Natural killer cell (primary cell): ENCODE measurements at regions of chr6 and their contacts with region 1.

Region 1: DNA sequence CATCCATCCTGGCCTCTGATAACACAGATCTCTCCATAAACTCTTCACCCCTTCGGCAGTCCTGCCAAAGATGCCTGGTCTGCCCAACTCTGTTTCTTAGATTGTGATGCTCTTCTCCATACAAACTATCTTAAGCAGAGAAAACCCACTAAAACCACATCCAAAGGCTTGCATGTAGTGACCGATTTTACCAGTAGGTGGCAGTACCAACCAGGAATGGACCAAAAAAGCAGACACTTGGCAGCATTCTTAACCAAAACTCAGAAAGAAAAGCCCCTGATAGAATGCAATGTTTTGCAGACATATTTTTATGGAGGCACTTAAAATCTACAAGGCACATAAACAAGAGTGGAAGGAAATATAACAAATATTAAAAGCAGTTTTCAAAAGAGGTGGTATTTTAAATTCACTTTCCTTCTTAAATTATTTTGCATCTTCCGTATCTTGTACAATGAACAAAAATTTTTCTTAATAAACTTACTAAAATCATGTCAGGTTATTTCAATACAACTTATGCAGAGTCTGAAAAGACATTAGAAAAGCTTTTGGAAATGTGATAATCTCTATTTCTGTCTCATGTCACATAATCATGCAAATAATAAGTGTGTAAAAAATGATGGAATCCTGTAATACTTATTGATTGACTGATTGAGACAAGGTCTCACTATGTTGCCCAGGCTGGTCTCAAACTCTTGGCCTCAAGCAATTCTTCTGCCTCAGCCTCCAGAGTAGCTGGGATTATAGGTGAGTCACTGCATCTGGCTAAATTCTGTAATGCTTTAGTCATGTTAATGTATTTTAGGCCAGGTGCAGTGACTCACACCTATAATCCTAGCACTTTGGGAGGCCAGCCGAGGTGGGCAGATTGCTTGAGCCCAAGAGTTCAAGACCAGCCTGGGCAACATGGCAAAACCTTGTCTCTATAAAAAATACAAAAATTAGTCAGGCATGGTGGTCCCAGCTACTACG is 29.4 kb downstream of the LRP11 start:
- DNase-seq: peak; percentile 48 to 87
- ATAC-seq: peak; percentile 73 to 88 (median 80)
- H3K4me3 ChIP-seq: no peak overlapping the region
- H3K4me3 Mint-ChIP-seq: no peak overlapping the region
- H3K27ac ChIP-seq: no peak overlapping the region
- H3K27ac Mint-ChIP-seq: no peak overlapping the region
- H3K4me1 ChIP-seq: no peaks in the 10 kb centered on the region
- H3K4me1 Mint-ChIP-seq: no peaks in the 10 kb centered on the region
- H3K27me3 ChIP-seq: no peaks in the 10 kb centered on the region
- H3K27me3 Mint-ChIP-seq: peaks cover 0 to 7% of the 10 kb centered on the region in 2 donors
- CTCF ChIP-seq: peak; percentile 93

Region 2: GRCh38 chr6:148358188-148358785 is 1476.5 kb before region 1 on chr6:
- intact Hi-C with region 1: no loop called
- DNase-seq: no peak
- ATAC-seq: no peak
- H3K4me3 ChIP-seq: no peak overlapping the region
- H3K4me3 Mint-ChIP-seq: no peak overlapping the region
- H3K27ac ChIP-seq: no peak overlapping the region
- H3K27ac Mint-ChIP-seq: no peak overlapping the region
- H3K4me1 ChIP-seq: no peaks in the 10 kb centered on the region
- H3K4me1 Mint-ChIP-seq: no peaks in the 10 kb centered on the region
- H3K27me3 ChIP-seq: no peaks in the 10 kb centered on the region
- H3K27me3 Mint-ChIP-seq: peaks cover 0 to 3% of the 10 kb centered on the region in 2 donors
- CTCF ChIP-seq: no peak

Region 3: DNA sequence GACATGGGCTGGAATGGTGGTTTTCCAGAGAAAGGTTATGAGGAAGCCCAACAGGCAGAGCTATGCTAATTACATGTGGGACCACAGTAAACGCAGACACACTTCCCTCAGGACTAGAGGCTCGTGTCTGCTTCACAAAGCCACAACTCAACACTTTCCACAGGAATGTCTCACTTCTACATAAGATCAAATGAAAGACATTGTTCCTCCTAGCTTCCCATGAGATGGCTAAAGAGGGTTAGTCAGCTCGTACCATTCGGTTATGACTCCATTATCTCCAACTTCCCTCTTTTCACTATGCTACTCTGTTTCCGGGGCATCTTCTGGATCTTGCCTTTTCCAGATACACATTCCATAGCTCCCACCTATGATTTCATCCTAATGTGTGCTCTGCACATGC is 320.9 kb before region 1 on chr6:
- intact Hi-C with region 1: no loop called
- DNase-seq: no peak
- ATAC-seq: no peak
- H3K4me3 ChIP-seq: no peak overlapping the region
- H3K4me3 Mint-ChIP-seq: no peak overlapping the region
- H3K27ac ChIP-seq: no peak overlapping the region
- H3K27ac Mint-ChIP-seq: peak overlapping the region in 1 of 2 donors; percentile 49
- H3K4me1 ChIP-seq: no peaks in the 10 kb centered on the region
- H3K4me1 Mint-ChIP-seq: peaks cover 5 to 6% of the 10 kb centered on the region in 2 donors
- H3K27me3 ChIP-seq: no peaks in the 10 kb centered on the region
- H3K27me3 Mint-ChIP-seq: no peaks in the 10 kb centered on the region
- CTCF ChIP-seq: no peak

Region 4: GRCh38 chr6:149806127-149806526 is 28.7 kb before region 1 on chr6:
- intact Hi-C with region 1: no loop called
- DNase-seq: no peak
- ATAC-seq: no peak
- H3K4me3 ChIP-seq: no peak overlapping the region
- H3K4me3 Mint-ChIP-seq: no peak overlapping the region
- H3K27ac ChIP-seq: no peak overlapping the region
- H3K27ac Mint-ChIP-seq: peak overlapping the region; percentile 1 to 7
- H3K4me1 ChIP-seq: no peaks in the 10 kb centered on the region
- H3K4me1 Mint-ChIP-seq: peaks cover 5 to 12% of the 10 kb centered on the region in 2 donors
- H3K27me3 ChIP-seq: no peaks in the 10 kb centered on the region
- H3K27me3 Mint-ChIP-seq: no peaks in the 10 kb centered on the region
- CTCF ChIP-seq: no peak

Region 5: DNA sequence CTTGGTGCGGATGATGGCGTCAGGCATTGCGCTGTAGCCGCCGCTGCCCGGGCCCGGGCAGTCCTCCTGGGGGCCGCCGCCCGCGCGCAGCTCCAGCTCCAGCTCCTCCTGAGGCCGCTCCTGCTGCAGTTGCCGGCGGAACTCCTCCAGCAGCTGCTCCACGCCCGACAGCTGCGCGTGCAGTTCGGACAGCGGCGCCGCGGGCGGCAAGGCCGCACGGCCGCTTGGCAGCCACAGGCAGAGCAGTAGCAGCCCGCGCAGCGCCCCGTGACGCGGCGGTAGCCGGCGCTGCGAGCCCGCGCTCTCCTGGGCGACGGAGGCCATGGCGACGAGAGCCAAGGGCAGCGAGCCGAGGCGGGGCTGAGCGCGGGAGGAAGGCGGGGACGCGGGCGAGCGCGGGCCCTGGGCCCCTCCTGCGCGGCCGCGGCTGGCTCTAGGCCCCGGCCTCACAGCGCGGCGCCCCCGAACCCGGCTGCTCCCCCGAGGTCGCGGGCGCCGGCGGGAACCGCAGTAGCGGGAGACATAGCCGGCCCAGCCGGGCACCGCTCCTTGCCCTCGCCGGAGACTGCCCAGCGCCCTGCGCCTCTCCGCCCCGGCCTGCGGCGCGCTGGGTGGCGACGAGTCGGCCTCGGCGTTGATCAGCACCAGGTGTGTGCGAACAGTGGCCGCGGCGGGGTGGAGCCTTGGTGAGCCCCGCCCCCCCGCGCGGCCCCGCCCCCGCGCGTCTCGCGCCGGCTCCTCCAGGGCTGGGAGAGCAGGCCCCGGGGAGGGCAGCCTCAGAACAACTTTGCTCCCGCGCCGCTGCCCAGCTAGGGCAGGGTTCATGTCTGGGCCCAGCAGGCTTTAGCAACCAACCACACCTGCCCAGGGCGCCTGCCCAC is 29.1 kb after region 1 on chr6 and contains the start of gene LRP11:
- intact Hi-C with region 1: loop called (anchors 1 kb)
- DNase-seq: peak; percentile 65 to 88
- ATAC-seq: peak; percentile 88 to 94 (median 92)
- H3K4me3 ChIP-seq: peak within 1 kb of the TSS; percentile 19
- H3K4me3 Mint-ChIP-seq: peak within 1 kb of the TSS; percentile 78
- H3K27ac ChIP-seq: no peak within 1 kb of the TSS
- H3K27ac Mint-ChIP-seq: no peak within 1 kb of the TSS
- H3K4me1 ChIP-seq: peaks cover 13% of the 10 kb centered on the region
- H3K4me1 Mint-ChIP-seq: peaks cover 0 to 5% of the 10 kb centered on the region in 2 donors
- H3K27me3 ChIP-seq: peaks cover 2% of the 10 kb centered on the region
- H3K27me3 Mint-ChIP-seq: peaks cover 23 to 28% of the 10 kb centered on the region in 2 donors
- CTCF ChIP-seq: no peak
- total RNA-seq, gene LRP11: 0.16 to 0.43 (median 0.26) TPM

Region 6: GRCh38 chr6:149925974-149926777 is 91.4 kb after region 1 on chr6:
- intact Hi-C with region 1: loop called (anchors 5 kb)
- DNase-seq: peak; percentile 23 to 80
- ATAC-seq: peak; percentile 59 to 70 (median 70)
- H3K4me3 ChIP-seq: no peak overlapping the region
- H3K4me3 Mint-ChIP-seq: no peak overlapping the region
- H3K27ac ChIP-seq: no peak overlapping the region
- H3K27ac Mint-ChIP-seq: no peak overlapping the region
- H3K4me1 ChIP-seq: peaks cover 28% of the 10 kb centered on the region
- H3K4me1 Mint-ChIP-seq: peaks cover 16 to 33% of the 10 kb centered on the region in 2 donors
- H3K27me3 ChIP-seq: peaks cover 55% of the 10 kb centered on the region
- H3K27me3 Mint-ChIP-seq: peaks cover 76 to 81% of the 10 kb centered on the region in 2 donors
- CTCF ChIP-seq: peak; percentile 32

Region 7: DNA sequence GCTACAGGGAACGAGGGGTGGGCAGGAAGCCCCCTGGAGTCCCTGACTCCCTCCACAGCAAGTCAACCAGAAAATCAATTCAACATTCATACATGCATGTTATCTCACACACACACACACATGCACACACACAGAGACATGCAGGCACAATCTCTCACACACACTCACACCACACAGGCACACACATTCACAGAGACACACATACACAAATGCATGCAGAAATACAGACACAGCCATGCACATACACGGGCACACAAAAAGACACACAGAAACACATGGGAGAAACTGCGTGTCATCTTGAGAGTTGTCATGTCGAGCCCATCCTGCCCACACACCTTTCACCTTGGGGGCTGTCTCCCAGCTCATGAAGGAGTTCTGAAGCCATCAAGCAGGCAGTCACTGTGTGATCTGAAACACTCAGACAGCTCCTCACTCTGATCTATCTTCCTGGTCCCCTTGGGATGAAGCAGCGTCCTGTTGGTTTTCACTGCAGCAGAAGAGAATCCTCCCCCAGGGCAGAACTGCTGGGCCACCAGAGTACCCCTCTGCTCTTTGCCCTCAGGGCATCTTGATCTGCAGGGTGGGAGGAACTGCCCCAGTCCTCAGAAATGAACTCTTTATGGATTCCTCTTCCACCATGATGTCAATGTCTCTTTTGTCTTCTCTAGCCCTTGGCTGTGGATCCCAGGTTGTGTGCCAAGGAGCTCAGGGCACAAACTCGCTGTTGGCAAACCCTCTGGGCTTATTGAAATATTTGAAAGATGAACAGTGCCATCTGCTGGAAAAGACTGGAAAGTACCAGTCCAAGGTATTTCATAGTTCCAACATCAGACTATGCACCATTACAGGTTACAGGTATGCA is 181.8 kb after region 1 on chr6:
- intact Hi-C with region 1: loop called (anchors 1 kb)
- DNase-seq: peak in 1 of 2 donors; percentile 86
- ATAC-seq: peak; percentile 71 to 84 (median 80)
- H3K4me3 ChIP-seq: no peak overlapping the region
- H3K4me3 Mint-ChIP-seq: no peak overlapping the region
- H3K27ac ChIP-seq: no peak overlapping the region
- H3K27ac Mint-ChIP-seq: no peak overlapping the region
- H3K4me1 ChIP-seq: peaks cover 11% of the 10 kb centered on the region
- H3K4me1 Mint-ChIP-seq: peaks cover 10 to 11% of the 10 kb centered on the region in 2 donors
- H3K27me3 ChIP-seq: peaks cover 39% of the 10 kb centered on the region
- H3K27me3 Mint-ChIP-seq: peaks cover 59 to 61% of the 10 kb centered on the region in 2 donors
- CTCF ChIP-seq: peak; percentile 67